Heart left ventricle (tissue), 16 donors: ENCODE measurements at regions of chr14 and their contacts with region 1.

Region 1: GRCh38 chr14:38873941-38874612 is 229.0 kb downstream of the SEC23A start:
- DNase-seq: no peak
- ATAC-seq: peak in 1 of 4 donors; percentile 42
- H3K4me3 ChIP-seq: no peak overlapping the region
- H3K27ac ChIP-seq: peak overlapping the region in 1 of 12 donors; percentile 70
- H3K4me1 ChIP-seq: peaks cover 0 to 20% (median 5%) of the 10 kb centered on the region in 12 donors
- H3K27me3 ChIP-seq: no peaks in the 10 kb centered on the region
- CTCF ChIP-seq: no peak
- POLR2A ChIP-seq: no peak

Region 2: GRCh38 chr14:38158468-38158867 is 715.6 kb before region 1 on chr14:
- intact Hi-C with region 1: no loop called
- DNase-seq: no peak
- ATAC-seq: no peak
- H3K4me3 ChIP-seq: no peak overlapping the region
- H3K27ac ChIP-seq: no peak overlapping the region
- H3K4me1 ChIP-seq: no peaks in the 10 kb centered on the region
- H3K27me3 ChIP-seq: no peaks in the 10 kb centered on the region
- CTCF ChIP-seq: no peak
- POLR2A ChIP-seq: no peak

Region 3: GRCh38 chr14:38662766-38663165 is 211.3 kb before region 1 on chr14:
- intact Hi-C with region 1: no loop called
- DNase-seq: no peak
- ATAC-seq: no peak
- H3K4me3 ChIP-seq: no peak overlapping the region
- H3K27ac ChIP-seq: no peak overlapping the region
- H3K4me1 ChIP-seq: no peaks in the 10 kb centered on the region
- H3K27me3 ChIP-seq: no peaks in the 10 kb centered on the region
- CTCF ChIP-seq: no peak
- POLR2A ChIP-seq: no peak

Region 4: DNA sequence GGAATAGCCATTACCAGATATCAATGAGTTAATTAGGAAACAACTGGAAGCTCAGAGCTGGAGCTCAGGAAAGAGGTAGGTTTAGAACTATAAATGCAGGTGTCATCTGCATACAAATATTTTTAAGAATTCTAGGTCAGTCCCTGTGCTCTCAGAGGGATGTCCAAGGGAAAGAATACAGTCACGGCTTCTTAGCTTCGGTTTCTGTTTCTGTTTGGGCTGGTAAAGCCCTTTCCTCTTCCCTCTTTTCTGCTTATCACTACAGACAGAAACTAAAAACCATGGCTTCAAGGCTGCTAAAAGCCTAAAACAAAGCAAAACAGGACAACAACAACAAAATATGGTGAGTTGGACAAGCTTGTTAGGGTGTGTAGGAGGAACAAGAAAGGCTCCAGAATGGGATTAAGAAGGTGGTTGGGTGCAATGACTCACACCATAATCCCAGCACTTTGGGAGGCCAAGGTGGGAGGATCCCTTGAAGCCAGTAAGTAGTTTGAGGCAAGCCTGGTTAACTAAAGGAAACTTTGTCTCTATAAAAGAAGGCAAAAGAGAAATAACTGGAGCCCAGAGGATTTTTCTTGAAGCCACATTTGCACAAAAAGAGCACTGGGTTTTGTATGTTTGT is 116.0 kb after region 1 on chr14:
- intact Hi-C with region 1: loop called in 1 of 10 experiments (anchors 10 kb)
- DNase-seq: no peak
- ATAC-seq: peak in 2 of 4 donors; percentile 29 to 56
- H3K4me3 ChIP-seq: peak overlapping the region in 2 of 12 donors; percentile 6 to 32
- H3K27ac ChIP-seq: peak overlapping the region in 8 of 12 donors; percentile 35 to 70 (median 60)
- H3K4me1 ChIP-seq: peaks cover 0 to 41% (median 6%) of the 10 kb centered on the region in 12 donors
- H3K27me3 ChIP-seq: no peaks in the 10 kb centered on the region
- CTCF ChIP-seq: no peak
- POLR2A ChIP-seq: no peak

Region 5: DNA sequence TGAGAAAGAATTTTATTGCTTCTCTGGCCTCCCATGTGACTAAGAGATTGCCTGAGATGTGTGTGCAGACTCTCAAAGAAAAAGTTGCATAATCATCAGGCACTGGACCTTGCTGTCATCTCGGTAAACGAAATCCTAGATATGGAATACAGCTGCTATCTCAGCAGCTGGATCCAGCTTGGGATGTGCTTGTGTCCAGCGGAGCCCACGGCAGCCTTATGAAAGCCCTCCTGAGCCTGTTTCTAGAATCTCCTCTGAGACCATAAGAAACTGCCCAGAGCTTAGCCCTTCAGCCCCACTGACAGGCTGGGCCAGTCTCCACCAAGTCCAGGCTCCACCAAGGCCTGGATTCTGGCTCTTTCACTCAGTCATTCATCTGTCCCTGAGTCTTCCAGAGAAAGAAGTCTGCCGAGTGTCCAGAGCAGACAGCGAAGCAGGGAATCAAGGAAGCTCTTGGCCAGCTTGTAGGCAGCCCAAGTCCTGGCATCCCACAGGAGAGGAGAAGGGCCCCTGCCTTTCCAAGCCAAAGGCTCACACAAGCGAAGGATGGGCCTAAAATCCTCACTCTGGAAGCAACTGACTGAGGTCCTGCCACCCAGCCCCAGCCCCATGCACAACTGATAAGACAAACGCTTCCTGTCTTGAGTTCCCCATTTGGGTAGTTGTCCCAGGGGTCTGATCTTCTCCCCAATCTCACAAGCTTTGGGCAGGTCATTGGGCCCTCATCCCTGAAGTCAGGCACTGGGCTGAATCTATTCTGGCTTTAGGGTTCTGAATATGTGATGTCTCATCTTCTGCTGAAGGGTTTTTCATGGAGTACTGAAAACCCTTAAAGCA is 131.2 kb after region 1 on chr14:
- intact Hi-C with region 1: loop called in 8 of 10 experiments (anchors 5 to 10 kb)
- DNase-seq: peak in 3 of 5 donors; percentile 32 to 64 (median 40)
- ATAC-seq: peak; percentile 51 to 94 (median 86)
- H3K4me3 ChIP-seq: no peak overlapping the region
- H3K27ac ChIP-seq: peak overlapping the region in 2 of 12 donors; percentile 13 to 17
- H3K4me1 ChIP-seq: peaks cover 0 to 6% (median 0%) of the 10 kb centered on the region in 12 donors
- H3K27me3 ChIP-seq: no peaks in the 10 kb centered on the region
- CTCF ChIP-seq: no peak
- POLR2A ChIP-seq: no peak

Region 6: GRCh38 chr14:39015360-39015961 is 141.4 kb after region 1 on chr14:
- intact Hi-C with region 1: loop called in 6 of 10 experiments (anchors 10 kb)
- DNase-seq: peak in 1 of 5 donors; percentile 16
- ATAC-seq: no peak
- H3K4me3 ChIP-seq: no peak overlapping the region
- H3K27ac ChIP-seq: no peak overlapping the region
- H3K4me1 ChIP-seq: peaks cover 0 to 4% (median 0%) of the 10 kb centered on the region in 12 donors
- H3K27me3 ChIP-seq: no peaks in the 10 kb centered on the region
- CTCF ChIP-seq: peak; percentile 67 to 92 (median 80)
- POLR2A ChIP-seq: no peak

Region 7: GRCh38 chr14:39339003-39339402 is 464.9 kb after region 1 on chr14:
- intact Hi-C with region 1: no loop called
- DNase-seq: no peak
- ATAC-seq: no peak
- H3K4me3 ChIP-seq: no peak overlapping the region
- H3K27ac ChIP-seq: no peak overlapping the region
- H3K4me1 ChIP-seq: no peaks in the 10 kb centered on the region
- H3K27me3 ChIP-seq: no peaks in the 10 kb centered on the region
- CTCF ChIP-seq: no peak
- POLR2A ChIP-seq: no peak